ENCODE measurements at regions of chr20 and their contacts with region 1.

Region 1: DNA sequence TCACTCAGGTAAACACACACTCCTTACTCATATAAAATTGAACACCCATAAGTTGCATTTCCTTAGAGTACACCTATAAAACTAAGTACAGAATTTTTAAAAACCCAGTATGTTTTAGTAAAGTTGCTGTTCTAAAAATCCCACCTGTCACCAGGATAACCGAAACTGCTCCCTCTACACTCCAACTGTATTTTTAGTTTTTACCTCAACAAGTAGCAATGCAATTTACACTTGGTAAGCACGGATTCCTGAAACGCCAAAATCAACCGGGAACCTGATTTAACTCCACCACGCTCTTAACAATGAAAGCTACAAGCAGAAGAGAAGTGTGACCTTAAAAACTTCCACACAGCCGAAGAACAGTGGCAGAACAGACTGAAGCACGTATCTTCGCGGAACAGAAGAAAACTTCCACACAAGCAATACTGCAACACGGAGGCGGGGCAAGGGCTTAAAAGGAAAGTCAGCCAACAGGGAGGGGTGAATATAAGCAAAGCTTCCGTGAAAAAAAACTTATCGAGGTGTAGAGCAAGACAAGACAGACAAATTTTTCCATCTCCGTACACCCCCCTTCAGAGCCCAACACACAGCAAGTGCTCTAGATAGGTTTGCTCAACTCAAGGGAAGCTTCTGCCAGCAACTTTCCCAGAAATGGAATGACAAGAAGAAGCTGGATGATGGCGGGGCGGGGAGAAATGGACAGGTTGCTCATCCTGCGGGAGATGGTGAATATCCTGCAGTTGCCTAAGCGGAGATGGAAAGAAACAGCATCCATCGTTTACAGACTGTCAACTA is 1.4 kb downstream of the STAU1 start:
- DNase-seq: peak; percentile 38 to 84 (median 62)
- ATAC-seq: peak; percentile 51
- H3K4me3 ChIP-seq: peak overlapping the region; percentile 72
- H3K4me3 Mint-ChIP-seq: peak overlapping the region; percentile 88
- H3K27ac ChIP-seq: peak overlapping the region; percentile 59 to 68
- H3K27ac Mint-ChIP-seq: peak overlapping the region; percentile 82
- H3K4me1 ChIP-seq: peaks cover 28% of the 10 kb centered on the region
- H3K4me1 Mint-ChIP-seq: peaks cover 52% of the 10 kb centered on the region
- H3K27me3 ChIP-seq: no peaks in the 10 kb centered on the region
- H3K27me3 Mint-ChIP-seq: no peaks in the 10 kb centered on the region
- CTCF ChIP-seq: no peak

Region 2: GRCh38 chr20:48760403-48760983 is 426.2 kb before region 1 on chr20:
- CTCF ChIA-PET with region 1: no interaction called
- POLR2A ChIA-PET with region 1: no interaction called
- intact Hi-C with region 1: no loop called
- DNase-seq: peak; percentile 39 to 95 (median 68)
- ATAC-seq: peak; percentile 82
- H3K4me3 ChIP-seq: peak overlapping the region; percentile 18
- H3K4me3 Mint-ChIP-seq: peak overlapping the region; percentile 46
- H3K27ac ChIP-seq: peak overlapping the region; percentile 68 to 86
- H3K27ac Mint-ChIP-seq: peak overlapping the region; percentile 92
- H3K4me1 ChIP-seq: peaks cover 82% of the 10 kb centered on the region
- H3K4me1 Mint-ChIP-seq: peaks cover 74% of the 10 kb centered on the region
- H3K27me3 ChIP-seq: no peaks in the 10 kb centered on the region
- H3K27me3 Mint-ChIP-seq: no peaks in the 10 kb centered on the region
- CTCF ChIP-seq: no peak

Region 3: DNA sequence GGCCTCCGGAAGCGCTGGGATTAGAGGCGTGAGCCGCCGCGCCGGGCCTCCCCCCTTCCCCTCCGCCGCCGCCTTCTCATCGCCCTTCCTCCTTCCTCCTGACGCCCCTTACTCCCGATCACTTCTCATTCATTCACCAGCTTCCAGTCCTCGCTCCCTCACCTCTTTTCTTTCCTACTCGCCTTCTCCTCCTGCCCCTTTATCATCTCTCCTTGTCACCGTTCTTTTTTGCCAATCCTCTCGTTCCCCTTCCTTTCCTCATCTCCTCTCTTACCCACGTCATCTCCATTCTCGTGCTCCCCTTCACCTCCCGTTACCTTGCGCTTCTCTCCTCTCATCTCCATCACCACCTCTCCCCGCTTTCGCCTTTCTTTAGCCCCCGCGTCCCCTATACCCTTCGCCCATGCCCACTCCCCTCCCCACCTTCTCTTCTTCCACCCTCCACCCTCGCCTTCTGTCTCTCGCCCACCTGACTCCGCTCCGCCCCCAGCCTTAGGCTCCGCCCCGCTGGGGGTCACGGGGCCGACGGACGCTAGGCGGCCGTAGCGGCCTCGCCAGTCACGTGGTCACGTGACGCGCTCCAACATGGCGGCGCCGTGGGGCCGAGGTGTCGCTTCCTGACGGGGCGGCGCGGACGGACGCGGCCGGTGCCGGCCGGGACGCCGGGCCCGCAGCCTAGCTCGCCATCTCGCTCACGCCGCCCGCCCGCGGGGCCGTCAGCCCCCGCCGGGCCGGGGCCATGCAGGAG is 265.4 kb before region 1 on chr20 and contains the start of gene ARFGEF2:
- CTCF ChIA-PET with region 1: no interaction called
- POLR2A ChIA-PET with region 1: no interaction called
- intact Hi-C with region 1: loop called in 1 of 2 experiments (anchors 5 kb)
- DNase-seq: peak; percentile 72 to 96 (median 89)
- ATAC-seq: peak; percentile 89
- H3K4me3 ChIP-seq: peak within 1 kb of the TSS; percentile 96
- H3K4me3 Mint-ChIP-seq: peak within 1 kb of the TSS; percentile 93
- H3K27ac ChIP-seq: peak within 1 kb of the TSS; percentile 83 to 92
- H3K27ac Mint-ChIP-seq: peak within 1 kb of the TSS; percentile 93
- H3K4me1 ChIP-seq: peaks cover 23% of the 10 kb centered on the region
- H3K4me1 Mint-ChIP-seq: peaks cover 56% of the 10 kb centered on the region
- H3K27me3 ChIP-seq: no peaks in the 10 kb centered on the region
- H3K27me3 Mint-ChIP-seq: no peaks in the 10 kb centered on the region
- CTCF ChIP-seq: no peak
- total RNA-seq, gene ARFGEF2: 23.0 to 23.4 TPM

Region 4: GRCh38 chr20:49046087-49046900 is 140.4 kb before region 1 on chr20 and contains the start of gene CSE1L:
- CTCF ChIA-PET with region 1: no interaction called
- POLR2A ChIA-PET with region 1: interaction called, 3 read pairs
- intact Hi-C with region 1: loop called in 1 of 2 experiments (anchors 5 kb)
- DNase-seq: peak; percentile 88 to 97 (median 93)
- ATAC-seq: peak; percentile 84
- H3K4me3 ChIP-seq: peak within 1 kb of the TSS; percentile 97
- H3K4me3 Mint-ChIP-seq: peak within 1 kb of the TSS; percentile 97
- H3K27ac ChIP-seq: peak within 1 kb of the TSS; percentile 91 to 96
- H3K27ac Mint-ChIP-seq: peak within 1 kb of the TSS; percentile 92
- H3K4me1 ChIP-seq: peaks cover 41% of the 10 kb centered on the region
- H3K4me1 Mint-ChIP-seq: peaks cover 39% of the 10 kb centered on the region
- H3K27me3 ChIP-seq: no peaks in the 10 kb centered on the region
- H3K27me3 Mint-ChIP-seq: no peaks in the 10 kb centered on the region
- CTCF ChIP-seq: no peak
- total RNA-seq, gene CSE1L: 30.0 to 30.1 TPM

Region 5: DNA sequence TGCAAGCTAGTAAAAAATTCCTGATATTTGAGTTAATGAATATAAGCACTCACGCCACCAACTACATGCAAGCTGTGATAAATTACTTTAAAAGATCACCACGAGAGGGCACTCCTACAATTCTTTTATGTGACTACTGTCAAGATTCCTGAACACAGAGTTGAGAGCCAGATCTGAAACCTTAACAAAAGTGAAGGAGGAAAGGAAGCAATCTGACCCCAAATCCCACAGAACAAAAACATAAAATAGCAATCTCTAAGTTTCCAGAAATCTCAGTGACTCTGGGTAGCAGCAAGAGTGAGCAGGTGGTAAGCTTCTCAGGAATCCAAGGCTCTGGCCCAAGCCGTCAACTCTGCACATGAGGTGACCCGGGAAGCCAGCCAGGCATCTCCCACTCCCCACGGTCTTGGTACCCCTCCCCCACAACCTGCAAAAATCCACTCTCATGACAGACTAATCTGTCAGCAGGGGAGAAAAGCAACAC is 53.7 kb before region 1 on chr20:
- CTCF ChIA-PET with region 1: interaction called, 5 read pairs
- POLR2A ChIA-PET with region 1: interaction called, 7 read pairs
- intact Hi-C with region 1: loop called (anchors 2 kb)
- DNase-seq: peak in 5 of 14 experiments; percentile 10 to 75 (median 71)
- ATAC-seq: peak; percentile 76
- H3K4me3 ChIP-seq: no peak overlapping the region
- H3K4me3 Mint-ChIP-seq: no peak overlapping the region
- H3K27ac ChIP-seq: no peak overlapping the region
- H3K27ac Mint-ChIP-seq: peak overlapping the region; percentile 6
- H3K4me1 ChIP-seq: no peaks in the 10 kb centered on the region
- H3K4me1 Mint-ChIP-seq: peaks cover 24% of the 10 kb centered on the region
- H3K27me3 ChIP-seq: no peaks in the 10 kb centered on the region
- H3K27me3 Mint-ChIP-seq: no peaks in the 10 kb centered on the region
- CTCF ChIP-seq: peak; percentile 72

Region 6: GRCh38 chr20:49161428-49162152 is 25.1 kb before region 1 on chr20:
- CTCF ChIA-PET with region 1: no interaction called
- POLR2A ChIA-PET with region 1: interaction called, 3 read pairs
- intact Hi-C with region 1: loop called in 1 of 2 experiments (anchors 2 kb)
- DNase-seq: peak in 1 of 14 experiments; percentile 7
- ATAC-seq: peak; percentile 37
- H3K4me3 ChIP-seq: no peak overlapping the region
- H3K4me3 Mint-ChIP-seq: no peak overlapping the region
- H3K27ac ChIP-seq: no peak overlapping the region
- H3K27ac Mint-ChIP-seq: peak overlapping the region; percentile 38
- H3K4me1 ChIP-seq: peaks cover 6% of the 10 kb centered on the region
- H3K4me1 Mint-ChIP-seq: peaks cover 43% of the 10 kb centered on the region
- H3K27me3 ChIP-seq: no peaks in the 10 kb centered on the region
- H3K27me3 Mint-ChIP-seq: no peaks in the 10 kb centered on the region
- CTCF ChIP-seq: no peak

Region 7: DNA sequence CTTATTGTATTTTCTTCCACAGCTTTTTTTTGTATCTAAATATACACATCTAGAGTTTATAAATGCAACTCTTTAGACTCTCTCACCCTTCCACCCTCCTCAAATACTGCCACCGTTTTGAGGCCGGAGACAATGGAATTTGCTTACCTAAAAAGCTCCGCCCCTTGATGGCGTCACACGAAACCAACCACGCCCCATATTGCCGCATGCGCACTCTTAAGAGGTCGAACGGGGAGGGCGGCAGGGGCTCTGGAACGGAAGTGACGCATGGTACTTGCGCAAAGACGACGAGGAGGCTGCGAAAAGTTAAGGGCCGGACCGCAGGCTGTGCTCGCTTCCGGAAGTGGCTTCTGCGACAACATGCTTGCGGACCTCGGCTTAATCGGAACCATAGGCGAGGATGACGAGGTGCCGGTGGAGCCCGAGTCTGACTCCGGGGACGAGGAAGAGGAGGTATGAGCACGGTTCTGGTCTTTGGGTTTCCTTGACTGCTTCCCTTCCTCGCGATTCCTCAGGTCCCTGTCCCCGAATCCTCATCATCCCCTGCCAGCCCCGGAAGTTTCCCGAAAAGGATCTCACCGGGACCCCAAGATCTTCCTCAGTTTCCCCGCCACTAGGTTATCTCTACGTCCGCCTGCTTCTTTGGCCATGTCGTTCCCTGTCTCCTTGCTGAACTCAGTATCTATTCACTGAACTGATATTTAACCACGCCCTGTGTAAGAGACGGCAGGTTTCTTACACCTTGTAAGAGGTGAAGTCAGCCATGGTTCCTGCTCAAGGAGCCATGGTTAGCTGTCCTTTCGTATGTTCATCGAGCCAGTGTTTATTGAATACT is 32.6 kb after region 1 on chr20 and contains the start of gene DDX27:
- CTCF ChIA-PET with region 1: interaction called, 21 read pairs
- POLR2A ChIA-PET with region 1: interaction called, 33 read pairs
- intact Hi-C with region 1: loop called (anchors 1 kb)
- DNase-seq: peak; percentile 90 to 99 (median 96)
- ATAC-seq: peak; percentile 84
- H3K4me3 ChIP-seq: peak within 1 kb of the TSS; percentile 79
- H3K4me3 Mint-ChIP-seq: peak within 1 kb of the TSS; percentile 86
- H3K27ac ChIP-seq: peak within 1 kb of the TSS; percentile 85 to 91
- H3K27ac Mint-ChIP-seq: peak within 1 kb of the TSS; percentile 87
- H3K4me1 ChIP-seq: peaks cover 33% of the 10 kb centered on the region
- H3K4me1 Mint-ChIP-seq: peaks cover 24% of the 10 kb centered on the region
- H3K27me3 ChIP-seq: no peaks in the 10 kb centered on the region
- H3K27me3 Mint-ChIP-seq: no peaks in the 10 kb centered on the region
- CTCF ChIP-seq: no peak
- total RNA-seq, gene DDX27: 116 to 126 TPM

Region 8: GRCh38 chr20:49278036-49278817 is 91.5 kb after region 1 on chr20 and contains the start of gene ZNFX1:
- CTCF ChIA-PET with region 1: no interaction called
- POLR2A ChIA-PET with region 1: interaction called, 7 read pairs
- intact Hi-C with region 1: loop called in 1 of 2 experiments (anchors 1 kb)
- DNase-seq: peak; percentile 95 to 99 (median 99)
- ATAC-seq: peak; percentile 84
- H3K4me3 ChIP-seq: peak within 1 kb of the TSS; percentile 80
- H3K4me3 Mint-ChIP-seq: peak within 1 kb of the TSS; percentile 89
- H3K27ac ChIP-seq: peak within 1 kb of the TSS; percentile 90 to 95
- H3K27ac Mint-ChIP-seq: peak within 1 kb of the TSS; percentile 93
- H3K4me1 ChIP-seq: peaks cover 79% of the 10 kb centered on the region
- H3K4me1 Mint-ChIP-seq: peaks cover 70% of the 10 kb centered on the region
- H3K27me3 ChIP-seq: no peaks in the 10 kb centered on the region
- H3K27me3 Mint-ChIP-seq: peaks cover 4% of the 10 kb centered on the region
- CTCF ChIP-seq: no peak
- total RNA-seq, gene ZNFX1: 50.6 to 51.6 TPM